ENCODE measurements at regions of chr4 and their contacts with region 1.

Region 1: GRCh38 chr4:3442959-3443749 is 1.4 kb downstream of the HGFAC start:
- DNase-seq: peak; percentile 70
- H3K4me3 ChIP-seq: no peak overlapping the region
- H3K27ac ChIP-seq: no peak overlapping the region
- H3K4me1 ChIP-seq: no peaks in the 10 kb centered on the region
- CTCF ChIP-seq: peak; percentile 85

Region 2: GRCh38 chr4:3047464-3048286 is 395.5 kb before region 1 on chr4:
- CTCF ChIA-PET with region 1: no interaction called
- POLR2A ChIA-PET with region 1: no interaction called
- intact Hi-C with region 1: loop called (anchors 2 kb)
- DNase-seq: peak; percentile 92
- H3K4me3 ChIP-seq: peak overlapping the region; percentile 20
- H3K27ac ChIP-seq: peak overlapping the region; percentile 80
- H3K4me1 ChIP-seq: peaks cover 41% of the 10 kb centered on the region
- CTCF ChIP-seq: peak; percentile 80

Region 3: GRCh38 chr4:3106339-3107186 is 336.6 kb before region 1 on chr4:
- CTCF ChIA-PET with region 1: no interaction called
- POLR2A ChIA-PET with region 1: no interaction called
- intact Hi-C with region 1: loop called (anchors 2 kb)
- DNase-seq: peak; percentile 72
- H3K4me3 ChIP-seq: no peak overlapping the region
- H3K27ac ChIP-seq: no peak overlapping the region
- H3K4me1 ChIP-seq: no peaks in the 10 kb centered on the region
- CTCF ChIP-seq: peak; percentile 99

Region 4: DNA sequence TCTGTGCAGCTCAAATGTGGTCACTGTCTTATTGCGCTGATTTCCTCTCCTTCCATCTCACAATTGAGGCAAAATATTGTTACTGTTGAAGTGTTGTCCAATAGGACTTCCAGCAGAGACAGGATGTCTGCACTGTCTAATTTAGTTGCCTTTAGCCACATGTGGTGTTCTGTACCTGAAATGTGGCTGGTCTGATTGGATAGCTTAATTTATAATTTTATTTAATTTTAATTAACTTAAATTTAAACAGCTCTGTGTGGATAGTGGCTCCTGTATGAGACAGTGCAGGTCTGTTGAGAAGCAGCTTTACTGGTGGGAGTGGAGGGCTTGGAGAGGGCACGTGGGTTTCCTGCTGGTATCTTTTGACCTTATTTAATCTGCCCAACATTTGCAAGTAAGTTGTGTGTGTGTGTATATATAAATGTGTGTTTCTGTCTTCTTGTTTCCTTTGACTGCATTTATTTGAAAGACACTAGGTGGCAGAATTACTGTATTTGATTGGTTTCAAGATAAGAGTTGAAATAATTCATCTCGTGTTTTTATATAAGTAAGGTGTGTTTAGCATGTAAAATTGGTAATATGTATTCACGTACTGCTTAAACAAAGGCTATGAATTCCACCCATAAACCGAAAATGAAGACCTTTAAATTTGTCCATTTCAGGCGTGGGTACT is 249.5 kb before region 1 on chr4:
- CTCF ChIA-PET with region 1: no interaction called
- POLR2A ChIA-PET with region 1: no interaction called
- intact Hi-C with region 1: loop called (anchors 2 kb)
- DNase-seq: peak; percentile 16
- H3K4me3 ChIP-seq: no peak overlapping the region
- H3K27ac ChIP-seq: no peak overlapping the region
- H3K4me1 ChIP-seq: no peaks in the 10 kb centered on the region
- CTCF ChIP-seq: peak; percentile 76

Region 5: GRCh38 chr4:3346146-3346545 is 97.0 kb before region 1 on chr4:
- CTCF ChIA-PET with region 1: no interaction called
- POLR2A ChIA-PET with region 1: no interaction called
- intact Hi-C with region 1: loop called (anchors 1 kb)
- DNase-seq: peak; percentile 79
- H3K4me3 ChIP-seq: no peak overlapping the region
- H3K27ac ChIP-seq: no peak overlapping the region
- H3K4me1 ChIP-seq: peaks cover 7% of the 10 kb centered on the region
- CTCF ChIP-seq: peak; percentile 96

Region 6: GRCh38 chr4:3871181-3871871 is 428.2 kb after region 1 on chr4:
- CTCF ChIA-PET with region 1: no interaction called
- POLR2A ChIA-PET with region 1: no interaction called
- intact Hi-C with region 1: no loop called
- DNase-seq: no peak
- H3K4me3 ChIP-seq: no peak overlapping the region
- H3K27ac ChIP-seq: no peak overlapping the region
- H3K4me1 ChIP-seq: no peaks in the 10 kb centered on the region
- CTCF ChIP-seq: no peak